ENCODE measurements at regions of chr7 and their contacts with region 1.

Region 1: GRCh38 chr7:50317221-50317678 is 12.7 kb downstream of the IKZF1 start:
- DNase-seq: peak; percentile 75
- H3K4me3 Mint-ChIP-seq: peak overlapping the region; percentile 86
- H3K27ac Mint-ChIP-seq: peak overlapping the region; percentile 94
- H3K4me1 Mint-ChIP-seq: peaks cover 92% of the 10 kb centered on the region
- H3K27me3 Mint-ChIP-seq: no peaks in the 10 kb centered on the region

Region 2: DNA sequence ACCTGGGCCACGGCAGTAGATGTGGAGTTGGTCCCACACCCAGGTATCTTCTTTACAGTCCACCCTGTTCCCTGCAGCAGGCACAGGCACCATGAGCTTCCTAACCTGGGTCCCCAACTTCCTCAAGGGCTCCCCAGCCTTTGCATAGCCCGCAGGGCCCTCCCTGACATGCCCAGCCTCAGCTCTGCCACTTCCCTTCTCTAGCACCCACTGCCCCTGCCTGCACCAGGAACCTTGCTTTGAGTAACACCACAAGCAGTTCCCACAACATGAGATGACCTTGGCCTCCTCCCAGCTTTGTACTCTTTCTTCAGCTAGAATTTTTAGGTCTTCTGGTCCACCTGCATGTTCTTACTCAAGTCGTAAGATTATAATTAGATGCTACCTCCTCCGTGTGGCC is 132.0 kb before region 1 on chr7:
- CTCF ChIA-PET with region 1: no interaction called
- POLR2A ChIA-PET with region 1: no interaction called
- intact Hi-C with region 1: no loop called
- DNase-seq: no peak
- H3K4me3 Mint-ChIP-seq: no peak overlapping the region
- H3K27ac Mint-ChIP-seq: no peak overlapping the region
- H3K4me1 Mint-ChIP-seq: peaks cover 9% of the 10 kb centered on the region
- H3K27me3 Mint-ChIP-seq: no peaks in the 10 kb centered on the region

Region 3: GRCh38 chr7:50335795-50336754 is 18.8 kb after region 1 on chr7:
- CTCF ChIA-PET with region 1: interaction called, 17 read pairs
- POLR2A ChIA-PET with region 1: interaction called, 217 read pairs
- intact Hi-C with region 1: loop called (anchors 1 kb)
- DNase-seq: peak; percentile 93
- H3K4me3 Mint-ChIP-seq: no peak overlapping the region
- H3K27ac Mint-ChIP-seq: no peak overlapping the region
- H3K4me1 Mint-ChIP-seq: peaks cover 2% of the 10 kb centered on the region
- H3K27me3 Mint-ChIP-seq: no peaks in the 10 kb centered on the region

Region 4: DNA sequence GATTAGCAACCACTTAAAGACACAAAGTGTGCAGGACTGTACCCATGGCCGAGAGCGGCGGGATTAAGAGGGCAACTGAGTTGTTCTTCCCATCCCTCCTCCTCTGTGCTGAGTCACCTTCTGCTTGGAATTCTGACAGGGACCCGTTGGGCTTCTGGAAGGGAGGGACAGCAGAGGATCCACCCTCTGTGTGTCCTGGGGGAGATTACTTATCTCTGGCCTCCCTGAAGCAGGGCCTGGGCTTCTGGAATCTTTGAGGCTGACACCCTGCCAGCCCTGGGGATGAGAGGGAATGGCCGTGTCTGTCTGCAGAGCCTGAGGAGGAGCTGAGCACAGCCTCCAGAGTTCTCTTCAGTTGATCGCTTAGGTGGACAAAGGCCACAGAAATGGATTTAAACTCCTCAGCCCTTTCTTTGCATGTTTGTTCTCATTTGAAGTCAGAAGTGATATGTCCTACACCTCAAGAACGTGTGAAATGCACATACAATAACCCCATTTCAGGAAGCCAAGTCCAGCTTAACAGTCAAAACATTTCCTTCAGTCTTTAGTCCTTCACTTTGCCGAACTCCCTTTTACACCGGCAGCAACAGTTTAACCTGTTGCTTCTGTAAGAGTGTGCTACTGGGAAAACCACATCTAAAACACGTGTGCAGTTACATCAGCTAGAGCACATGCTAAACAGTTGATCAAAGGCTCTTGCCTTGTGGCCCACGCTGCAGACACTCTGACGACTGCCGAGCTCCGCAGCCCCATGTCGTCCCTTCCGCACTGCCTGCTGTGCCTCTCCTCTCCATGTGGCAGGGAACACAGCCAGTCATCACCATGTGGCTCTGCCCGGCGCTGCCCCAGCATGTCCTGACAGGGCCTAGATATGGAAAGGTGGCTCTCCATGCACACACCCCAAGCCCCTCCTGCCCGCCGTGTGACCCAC is 43.0 kb after region 1 on chr7:
- CTCF ChIA-PET with region 1: interaction called, 6 read pairs
- POLR2A ChIA-PET with region 1: interaction called, 40 read pairs
- intact Hi-C with region 1: no loop called
- DNase-seq: peak; percentile 90
- H3K4me3 Mint-ChIP-seq: peak overlapping the region; percentile 61
- H3K27ac Mint-ChIP-seq: peak overlapping the region; percentile 97
- H3K4me1 Mint-ChIP-seq: peaks cover 98% of the 10 kb centered on the region
- H3K27me3 Mint-ChIP-seq: no peaks in the 10 kb centered on the region

Region 5: GRCh38 chr7:50369143-50370026 is 52.1 kb after region 1 on chr7:
- CTCF ChIA-PET with region 1: interaction called, 83 read pairs
- POLR2A ChIA-PET with region 1: interaction called, 40 read pairs
- intact Hi-C with region 1: loop called (anchors 1 kb)
- DNase-seq: peak; percentile 56
- H3K4me3 Mint-ChIP-seq: no peak overlapping the region
- H3K27ac Mint-ChIP-seq: peak overlapping the region; percentile 93
- H3K4me1 Mint-ChIP-seq: peaks cover 97% of the 10 kb centered on the region
- H3K27me3 Mint-ChIP-seq: no peaks in the 10 kb centered on the region

Region 6: GRCh38 chr7:50446542-50446960 is 129.3 kb after region 1 on chr7:
- CTCF ChIA-PET with region 1: no interaction called
- POLR2A ChIA-PET with region 1: no interaction called
- intact Hi-C with region 1: no loop called
- DNase-seq: peak; percentile 49
- H3K4me3 Mint-ChIP-seq: no peak overlapping the region
- H3K27ac Mint-ChIP-seq: peak overlapping the region; percentile 61
- H3K4me1 Mint-ChIP-seq: peaks cover 46% of the 10 kb centered on the region
- H3K27me3 Mint-ChIP-seq: no peaks in the 10 kb centered on the region

Region 7: DNA sequence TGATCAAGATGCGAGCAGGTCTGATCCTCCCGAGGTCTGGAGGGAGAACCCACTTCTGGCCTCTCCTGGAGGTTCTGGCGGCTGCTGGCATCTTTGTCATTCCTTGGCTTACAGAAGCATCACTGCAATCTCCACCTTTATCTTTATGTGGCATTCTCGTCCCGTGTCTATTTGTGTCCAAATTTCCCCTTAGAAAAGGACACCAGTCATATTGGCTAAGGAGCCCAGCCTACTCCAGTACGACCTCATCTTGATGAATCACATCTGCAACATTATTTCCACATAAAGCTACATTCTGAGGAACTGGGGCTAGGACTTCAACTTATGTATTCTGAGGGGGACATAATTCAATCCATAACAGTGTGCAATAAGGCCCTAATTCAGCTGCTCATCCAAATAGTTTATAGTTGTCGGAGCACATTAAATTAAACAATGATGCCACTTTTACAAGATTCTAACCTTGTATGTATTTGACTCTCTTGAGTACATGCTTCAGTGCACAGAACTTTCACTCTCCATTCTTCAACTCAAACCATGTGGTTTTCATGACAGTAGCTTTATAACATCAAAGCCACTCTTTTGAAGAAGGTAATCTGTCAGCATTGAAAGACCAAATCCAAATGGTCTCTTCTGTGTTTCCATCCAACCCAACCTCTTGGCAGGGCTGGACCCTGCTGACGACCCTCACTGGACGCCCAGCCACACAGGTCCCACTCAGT is 334.2 kb after region 1 on chr7:
- CTCF ChIA-PET with region 1: no interaction called
- POLR2A ChIA-PET with region 1: no interaction called
- intact Hi-C with region 1: no loop called
- DNase-seq: no peak
- H3K4me3 Mint-ChIP-seq: no peak overlapping the region
- H3K27ac Mint-ChIP-seq: no peak overlapping the region
- H3K4me1 Mint-ChIP-seq: no peaks in the 10 kb centered on the region
- H3K27me3 Mint-ChIP-seq: no peaks in the 10 kb centered on the region

Region 8: GRCh38 chr7:50869108-50869725 is 552.0 kb after region 1 on chr7:
- CTCF ChIA-PET with region 1: no interaction called
- POLR2A ChIA-PET with region 1: no interaction called
- intact Hi-C with region 1: no loop called
- DNase-seq: no peak
- H3K4me3 Mint-ChIP-seq: no peak overlapping the region
- H3K27ac Mint-ChIP-seq: no peak overlapping the region
- H3K4me1 Mint-ChIP-seq: no peaks in the 10 kb centered on the region
- H3K27me3 Mint-ChIP-seq: peaks cover 12% of the 10 kb centered on the region